ENCODE measurements at regions of chr4 and their contacts with region 1.

Region 1: GRCh38 chr4:40986375-40986774 is 228.0 kb downstream of the APBB2 start:
- DNase-seq: peak in 3 of 10 donors; percentile 18 to 62 (median 59)
- H3K4me3 ChIP-seq: peak overlapping the region in 1 of 59 donors; percentile 21
- H3K27ac ChIP-seq: peak overlapping the region in 51 of 59 donors; percentile 12 to 87 (median 69)
- H3K27me3 ChIP-seq: no peaks in the 10 kb centered on the region
- CTCF ChIP-seq: peak in 10 of 56 donors; percentile 6 to 35 (median 15)

Region 2: DNA sequence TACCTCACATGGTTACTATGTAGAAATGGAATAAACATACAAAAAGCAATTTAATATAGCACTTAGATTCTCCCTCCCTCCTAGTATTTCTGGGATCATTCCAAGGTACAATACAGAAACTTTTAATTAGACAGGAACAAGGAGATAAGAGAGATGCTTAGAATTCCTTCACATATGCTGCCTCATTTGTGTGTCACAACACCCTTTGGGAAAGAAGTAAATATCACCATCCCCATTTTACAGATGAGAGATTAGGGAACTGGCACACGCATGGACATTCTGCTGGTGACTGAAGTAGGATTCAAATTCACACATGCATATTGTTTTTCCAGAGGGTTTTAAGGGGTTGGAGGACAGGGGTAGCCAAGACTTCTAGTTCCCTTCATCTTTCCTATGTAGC is 63.8 kb after region 1 on chr4:
- intact Hi-C with region 1: no loop called
- DNase-seq: no peak
- H3K4me3 ChIP-seq: no peak overlapping the region
- H3K27ac ChIP-seq: peak overlapping the region in 14 of 59 donors; percentile 4 to 62 (median 34)
- H3K27me3 ChIP-seq: no peaks in the 10 kb centered on the region
- CTCF ChIP-seq: no peak

Region 3: GRCh38 chr4:41060352-41061334 is 74.3 kb after region 1 on chr4:
- intact Hi-C with region 1: loop called (anchors 5 kb)
- DNase-seq: peak in 8 of 10 donors; percentile 38 to 75 (median 54)
- H3K4me3 ChIP-seq: peak overlapping the region in 4 of 59 donors; percentile 7 to 17 (median 13)
- H3K27ac ChIP-seq: peak overlapping the region; percentile 37 to 94 (median 75)
- H3K27me3 ChIP-seq: no peaks in the 10 kb centered on the region
- CTCF ChIP-seq: peak in 12 of 56 donors; percentile 2 to 32 (median 10)

Measured in dorsolateral prefrontal cortex (tissue), 120 donors.